ENCODE measurements at regions of chr17 and their contacts with region 1.

Region 1: GRCh38 chr17:16363749-16364536 is 10.7 kb upstream of the CENPV start:
- DNase-seq: peak; percentile 71
- H3K4me3 Mint-ChIP-seq: no peak overlapping the region
- H3K27ac Mint-ChIP-seq: no peak overlapping the region
- H3K4me1 Mint-ChIP-seq: no peaks in the 10 kb centered on the region
- H3K27me3 Mint-ChIP-seq: no peaks in the 10 kb centered on the region
- CTCF ChIP-seq: peak; percentile 75

Region 2: GRCh38 chr17:16243811-16244567 is 120.0 kb before region 1 on chr17:
- CTCF ChIA-PET with region 1: no interaction called
- intact Hi-C with region 1: no loop called
- DNase-seq: no peak
- H3K4me3 Mint-ChIP-seq: no peak overlapping the region
- H3K27ac Mint-ChIP-seq: no peak overlapping the region
- H3K4me1 Mint-ChIP-seq: peaks cover 19% of the 10 kb centered on the region
- H3K27me3 Mint-ChIP-seq: no peaks in the 10 kb centered on the region
- CTCF ChIP-seq: no peak

Region 3: GRCh38 chr17:16342979-16343378 is 21.0 kb before region 1 on chr17:
- CTCF ChIA-PET with region 1: no interaction called
- intact Hi-C with region 1: no loop called
- DNase-seq: no peak
- H3K4me3 Mint-ChIP-seq: no peak overlapping the region
- H3K27ac Mint-ChIP-seq: no peak overlapping the region
- H3K4me1 Mint-ChIP-seq: no peaks in the 10 kb centered on the region
- H3K27me3 Mint-ChIP-seq: no peaks in the 10 kb centered on the region
- CTCF ChIP-seq: no peak

Region 4: GRCh38 chr17:16353317-16354174 is 10.4 kb before region 1 on chr17 and contains the start of gene CENPV:
- CTCF ChIA-PET with region 1: interaction called, 11 read pairs
- intact Hi-C with region 1: no loop called
- DNase-seq: peak; percentile 66
- H3K4me3 Mint-ChIP-seq: peak within 1 kb of the TSS; percentile 80
- H3K27ac Mint-ChIP-seq: no peak within 1 kb of the TSS
- H3K4me1 Mint-ChIP-seq: no peaks in the 10 kb centered on the region
- H3K27me3 Mint-ChIP-seq: no peaks in the 10 kb centered on the region
- CTCF ChIP-seq: no peak
- total RNA-seq, gene CENPV: 49.9 and 58.0 TPM in 2 replicates

Region 5: GRCh38 chr17:16438557-16439302 is 74.8 kb after region 1 on chr17:
- CTCF ChIA-PET with region 1: interaction called, 10 read pairs
- intact Hi-C with region 1: no loop called
- DNase-seq: peak; percentile 91
- H3K4me3 Mint-ChIP-seq: peak overlapping the region; percentile 85
- H3K27ac Mint-ChIP-seq: peak overlapping the region; percentile 98
- H3K4me1 Mint-ChIP-seq: peaks cover 19% of the 10 kb centered on the region
- H3K27me3 Mint-ChIP-seq: no peaks in the 10 kb centered on the region
- CTCF ChIP-seq: no peak

Region 6: DNA sequence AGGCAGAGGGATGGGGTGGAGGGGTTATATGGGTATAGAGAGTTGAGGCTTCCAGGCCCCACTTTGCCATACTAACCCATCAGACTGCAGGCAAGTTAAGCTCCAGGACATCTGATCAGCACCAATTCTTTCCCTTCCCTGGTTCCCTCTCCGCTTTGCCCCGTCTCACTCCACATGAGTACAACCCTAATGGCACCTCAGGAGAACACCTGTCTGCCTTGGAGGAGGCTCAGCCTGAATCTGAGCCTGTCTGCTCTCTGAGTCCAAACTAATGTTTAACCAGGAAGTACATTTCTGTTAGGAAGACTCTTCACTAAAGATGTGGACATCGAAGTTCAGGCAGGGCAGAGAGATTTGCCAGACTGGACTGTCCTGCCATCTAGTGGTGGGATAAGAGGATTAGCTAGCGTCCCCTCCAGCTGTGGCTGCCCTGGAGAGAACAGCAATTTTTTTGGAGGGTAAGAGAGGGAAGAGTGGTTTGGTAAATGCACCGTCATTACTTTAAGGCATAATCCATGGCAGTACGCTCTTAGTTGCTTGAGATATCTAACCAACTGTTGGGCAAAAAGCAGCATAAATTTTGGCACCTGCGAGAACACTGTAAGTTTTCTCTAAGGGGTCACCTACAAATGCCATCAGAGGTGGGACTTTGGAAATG is 157.3 kb after region 1 on chr17:
- CTCF ChIA-PET with region 1: interaction called, 6 read pairs
- intact Hi-C with region 1: loop called (anchors 5 kb)
- DNase-seq: peak; percentile 70
- H3K4me3 Mint-ChIP-seq: no peak overlapping the region
- H3K27ac Mint-ChIP-seq: no peak overlapping the region
- H3K4me1 Mint-ChIP-seq: peaks cover 21% of the 10 kb centered on the region
- H3K27me3 Mint-ChIP-seq: peaks cover 7% of the 10 kb centered on the region
- CTCF ChIP-seq: peak; percentile 51

Measured in Calu3 (cell line).